Upper lobe of right lung (tissue), 1 donor: ENCODE measurements at regions of chr11 and their contacts with region 1.

Region 1: GRCh38 chr11:13210424-13210823 is 67.2 kb upstream of the BMAL1 start:
- DNase-seq: no peak
- ATAC-seq: peak; percentile 73
- H3K4me3 ChIP-seq: no peak overlapping the region
- H3K27ac ChIP-seq: no peak overlapping the region
- H3K4me1 ChIP-seq: peaks cover 16% of the 10 kb centered on the region
- H3K27me3 ChIP-seq: no peaks in the 10 kb centered on the region
- CTCF ChIP-seq: peak; percentile 62

Region 2: GRCh38 chr11:12664385-12664784 is 546.0 kb before region 1 on chr11:
- intact Hi-C with region 1: no loop called
- DNase-seq: no peak
- ATAC-seq: no peak
- H3K4me3 ChIP-seq: no peak overlapping the region
- H3K27ac ChIP-seq: no peak overlapping the region
- H3K4me1 ChIP-seq: no peaks in the 10 kb centered on the region
- H3K27me3 ChIP-seq: no peaks in the 10 kb centered on the region
- CTCF ChIP-seq: no peak

Region 3: GRCh38 chr11:12995188-12995587 is 215.2 kb before region 1 on chr11:
- intact Hi-C with region 1: no loop called
- DNase-seq: no peak
- ATAC-seq: peak; percentile 21
- H3K4me3 ChIP-seq: no peak overlapping the region
- H3K27ac ChIP-seq: no peak overlapping the region
- H3K4me1 ChIP-seq: no peaks in the 10 kb centered on the region
- H3K27me3 ChIP-seq: no peaks in the 10 kb centered on the region
- CTCF ChIP-seq: no peak

Region 4: DNA sequence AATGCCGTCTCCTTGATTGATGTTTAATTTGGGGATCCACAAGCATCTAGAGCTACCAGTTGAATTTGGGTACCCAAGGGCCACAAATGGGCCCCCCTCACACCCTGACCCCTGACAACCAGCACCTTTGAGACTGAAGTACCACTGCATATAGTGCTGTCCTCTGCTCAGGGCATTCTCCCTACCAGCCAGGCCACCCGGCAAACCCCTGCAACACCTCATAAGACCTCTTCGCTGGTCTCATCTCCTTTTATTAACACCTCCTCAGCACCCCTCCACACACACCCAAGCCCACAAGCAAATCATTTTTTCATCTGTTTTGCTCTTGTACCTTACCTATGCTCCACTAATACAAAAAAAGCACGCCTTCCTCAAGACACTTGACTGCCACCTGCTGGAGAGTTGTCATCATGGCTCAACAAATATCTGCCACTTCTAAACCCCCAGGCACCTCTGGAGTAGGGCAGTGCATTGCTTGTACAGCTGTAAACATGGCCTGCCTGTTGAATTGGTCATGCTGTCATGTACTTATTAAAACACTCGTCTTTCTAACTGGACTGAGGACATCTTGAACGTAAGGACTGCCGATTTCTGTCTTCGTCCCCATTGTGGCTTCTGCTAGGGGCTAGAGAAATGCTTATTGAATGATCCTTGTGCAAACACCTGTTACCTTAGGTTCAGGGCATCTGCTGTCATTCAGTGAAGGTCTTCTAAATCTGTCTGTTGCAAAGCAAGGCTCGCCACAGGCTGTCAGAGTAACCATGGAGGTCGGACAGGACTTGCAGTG is 133.7 kb after region 1 on chr11:
- intact Hi-C with region 1: loop called (anchors 10 kb)
- DNase-seq: no peak
- ATAC-seq: peak; percentile 78
- H3K4me3 ChIP-seq: no peak overlapping the region
- H3K27ac ChIP-seq: no peak overlapping the region
- H3K4me1 ChIP-seq: peaks cover 20% of the 10 kb centered on the region
- H3K27me3 ChIP-seq: no peaks in the 10 kb centered on the region
- CTCF ChIP-seq: peak; percentile 83